ENCODE measurements at regions of chr1 and their contacts with region 1.

Region 1: DNA sequence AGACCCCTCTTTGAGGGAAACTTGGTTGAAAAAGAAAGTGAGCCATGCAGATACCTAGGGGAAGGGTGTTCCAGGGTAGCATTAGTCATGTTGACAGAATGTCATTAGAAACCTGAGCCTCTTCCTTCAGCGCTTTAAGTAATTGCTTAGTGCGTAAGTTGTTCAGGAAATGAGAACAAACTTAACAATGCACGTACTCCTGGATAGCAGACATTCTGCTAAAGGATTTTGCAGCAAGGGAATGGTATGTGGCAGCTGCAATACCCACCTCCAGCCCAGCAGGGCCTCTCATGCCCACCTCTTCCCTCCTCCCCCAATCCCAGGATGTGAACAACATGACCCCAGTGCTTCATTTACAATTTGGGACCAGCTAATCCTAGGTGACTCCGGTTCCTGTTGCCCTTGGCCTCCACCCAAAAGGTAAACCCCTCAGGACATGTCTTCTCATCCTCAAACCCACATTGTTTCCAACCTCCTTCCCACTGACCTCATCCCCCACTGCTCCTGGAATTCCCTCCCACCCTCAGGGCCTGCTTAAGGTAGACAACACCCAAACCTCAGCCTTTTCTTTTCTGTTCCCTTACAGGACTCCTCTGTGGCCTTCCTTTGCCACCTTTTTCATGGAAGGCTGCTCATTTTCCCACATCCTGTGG is 98.0 kb upstream of the BCAR3 start:
- DNase-seq: peak; percentile 100
- H3K4me3 ChIP-seq: no peak overlapping the region
- H3K27ac ChIP-seq: peak overlapping the region; percentile 99
- H3K4me1 ChIP-seq: peaks cover 58% of the 10 kb centered on the region
- H3K27me3 ChIP-seq: no peaks in the 10 kb centered on the region
- CTCF ChIP-seq: peak in 1 of 2 donors; percentile 22

Region 2: DNA sequence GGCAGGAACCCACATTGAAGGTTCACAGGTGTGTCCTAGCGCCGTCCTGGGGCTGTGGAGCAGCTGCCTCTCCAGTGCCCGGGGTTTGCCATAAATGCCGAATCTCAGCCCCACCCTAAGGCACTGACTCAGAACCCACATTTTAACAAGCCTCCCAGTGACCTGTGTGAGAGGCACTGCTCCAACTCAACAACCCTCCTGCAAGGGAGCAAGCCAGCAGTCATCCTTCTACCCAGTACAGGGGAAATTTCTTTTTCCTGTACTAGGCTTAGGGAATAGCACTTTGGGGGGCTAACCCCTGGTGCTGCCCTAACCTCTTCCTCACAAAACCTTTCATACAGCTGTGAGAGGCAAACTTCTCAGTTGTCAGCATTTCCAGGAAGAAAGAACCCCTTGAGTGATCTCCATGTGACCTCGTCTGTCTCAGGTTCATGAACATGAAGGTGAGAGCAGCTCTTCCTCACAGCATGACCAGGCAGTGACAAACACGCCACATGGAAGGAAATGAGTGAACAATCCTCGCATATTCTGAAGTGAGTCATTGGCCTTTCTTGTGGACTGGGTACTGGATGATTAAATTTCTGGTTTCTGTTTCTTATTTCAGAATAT is 86.6 kb before region 1 on chr1:
- CTCF ChIA-PET with region 1: no interaction called
- dilution Hi-C with region 1: no loop called
- in situ Hi-C with region 1: no loop called
- intact Hi-C with region 1: loop called (anchors 1 kb)
- DNase-seq: peak; percentile 97
- H3K4me3 ChIP-seq: peak overlapping the region in 1 of 3 experiments; percentile 4
- H3K27ac ChIP-seq: peak overlapping the region; percentile 100
- H3K4me1 ChIP-seq: peaks cover 53% of the 10 kb centered on the region
- H3K27me3 ChIP-seq: no peaks in the 10 kb centered on the region
- CTCF ChIP-seq: no peak

Region 3: GRCh38 chr1:93804412-93804811 is 24.7 kb after region 1 on chr1:
- CTCF ChIA-PET with region 1: no interaction called
- dilution Hi-C with region 1: no loop called
- in situ Hi-C with region 1: no loop called
- intact Hi-C with region 1: loop called (anchors 1 kb)
- DNase-seq: peak; percentile 82
- H3K4me3 ChIP-seq: no peak overlapping the region
- H3K27ac ChIP-seq: peak overlapping the region; percentile 47
- H3K4me1 ChIP-seq: peaks cover 36% of the 10 kb centered on the region
- H3K27me3 ChIP-seq: no peaks in the 10 kb centered on the region
- CTCF ChIP-seq: no peak